Colonic mucosa (tissue), 4 donors: ENCODE measurements at regions of chr1 and their contacts with region 1.

Region 1: GRCh38 chr1:167401260-167401873 is 117.0 kb downstream of the CD247 start:
- DNase-seq: peak; percentile 61
- H3K4me3 ChIP-seq: no peak overlapping the region
- H3K27ac ChIP-seq: no peak overlapping the region
- H3K4me1 ChIP-seq: no peaks in the 10 kb centered on the region
- H3K27me3 ChIP-seq: no peaks in the 10 kb centered on the region
- CTCF ChIP-seq: peak; percentile 45

Region 2: DNA sequence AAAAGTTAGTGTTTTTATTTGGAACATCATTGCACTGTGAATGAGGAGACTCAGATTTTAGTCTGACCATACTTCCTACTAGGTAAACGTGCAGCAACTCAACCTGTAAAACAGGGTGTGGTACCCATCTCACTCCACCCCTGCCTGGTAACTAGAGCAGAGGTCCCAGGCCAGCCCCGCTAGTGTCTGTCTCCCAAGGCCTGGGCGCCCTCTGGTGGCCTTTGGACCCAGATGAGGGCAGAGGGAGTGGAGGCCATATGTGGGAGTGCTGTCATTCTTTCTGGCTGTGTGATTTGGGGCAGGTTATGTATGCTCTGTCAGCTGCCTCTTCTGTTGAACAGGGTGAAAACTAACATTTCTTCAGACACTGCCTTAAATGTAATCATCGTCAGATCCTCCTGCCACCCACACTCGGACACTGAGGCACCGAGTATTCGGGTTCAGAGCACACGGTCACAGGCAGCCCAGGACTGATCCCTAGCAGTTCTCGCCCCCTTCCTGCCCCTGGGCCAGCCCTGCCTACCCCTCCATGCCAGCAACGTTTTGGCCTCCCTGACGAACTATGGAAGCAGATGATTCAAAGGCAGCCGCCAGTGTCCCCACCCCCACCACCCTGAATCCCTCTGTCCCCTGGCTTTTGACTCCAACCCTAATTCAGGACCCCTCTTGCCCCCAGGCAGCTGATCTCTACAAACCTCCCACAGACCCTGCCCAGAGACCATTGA is 40.9 kb after region 1 on chr1:
- intact Hi-C with region 1: loop called (anchors 5 kb)
- DNase-seq: peak; percentile 98
- H3K4me3 ChIP-seq: no peak overlapping the region
- H3K27ac ChIP-seq: peak overlapping the region; percentile 43
- H3K4me1 ChIP-seq: peaks cover 3% of the 10 kb centered on the region
- H3K27me3 ChIP-seq: no peaks in the 10 kb centered on the region
- CTCF ChIP-seq: peak; percentile 80

Region 3: DNA sequence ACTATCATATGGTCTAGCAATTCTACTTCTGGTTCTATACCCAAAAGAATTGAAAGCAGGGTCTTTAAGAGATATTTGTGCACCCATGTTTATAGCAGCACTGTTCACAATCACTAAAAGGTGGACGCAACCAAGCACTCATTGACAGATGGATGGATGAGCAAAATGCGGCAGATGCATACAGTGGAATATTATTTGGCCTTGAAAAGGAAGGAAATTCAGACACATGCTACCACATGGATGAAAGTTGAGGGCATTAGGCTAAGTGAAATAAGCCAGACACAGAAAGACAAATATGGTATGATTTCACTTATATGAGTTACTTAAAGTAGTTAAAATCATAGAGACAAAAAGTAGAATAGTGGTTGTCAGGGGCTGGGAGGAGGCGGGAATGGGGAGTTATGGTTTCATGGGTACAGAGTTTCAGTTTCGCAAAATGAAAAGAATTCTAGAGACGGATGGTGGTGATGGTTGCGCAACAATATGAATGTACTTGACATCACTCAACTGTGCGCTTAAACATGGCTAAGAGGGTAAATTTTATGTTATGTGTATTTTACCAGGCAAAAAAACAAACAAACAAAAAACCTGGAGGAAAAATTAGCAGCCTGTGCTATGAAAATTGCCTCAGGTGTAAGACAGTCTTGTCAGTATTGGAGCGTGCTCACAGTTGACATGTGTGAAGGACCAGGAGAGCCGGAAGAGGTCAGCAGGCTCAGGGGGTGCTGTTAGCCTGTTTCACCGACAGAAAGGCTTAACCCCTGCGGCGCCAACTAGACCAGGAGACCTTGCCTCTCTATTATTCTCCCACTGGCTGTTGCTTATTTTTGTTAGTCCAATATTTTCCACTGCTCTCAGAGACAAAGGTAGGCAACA is 90.5 kb after region 1 on chr1:
- intact Hi-C with region 1: no loop called
- DNase-seq: no peak
- H3K4me3 ChIP-seq: no peak overlapping the region
- H3K27ac ChIP-seq: no peak overlapping the region
- H3K4me1 ChIP-seq: no peaks in the 10 kb centered on the region
- H3K27me3 ChIP-seq: no peaks in the 10 kb centered on the region
- CTCF ChIP-seq: no peak

Region 4: GRCh38 chr1:167629681-167630567 is 228.6 kb after region 1 on chr1 and contains the start of gene RCSD1:
- intact Hi-C with region 1: no loop called
- DNase-seq: no peak
- H3K4me3 ChIP-seq: peak within 1 kb of the TSS; percentile 61
- H3K27ac ChIP-seq: peak within 1 kb of the TSS; percentile 88
- H3K4me1 ChIP-seq: no peaks in the 10 kb centered on the region
- H3K27me3 ChIP-seq: no peaks in the 10 kb centered on the region
- CTCF ChIP-seq: no peak
- total RNA-seq, gene RCSD1: 4.7 to 5.7 TPM